Sciatic nerve (tissue), 2 donors: ENCODE measurements at regions of chr6 and their contacts with region 1.

Region 1: GRCh38 chr6:46720401-46720800 is 14.8 kb downstream of the PLA2G7 start:
- DNase-seq: no peak
- ATAC-seq: no peak

Region 2: GRCh38 chr6:48520951-48521350 is 1800.5 kb after region 1 on chr6:
- intact Hi-C with region 1: loop called (anchors 10 kb)
- DNase-seq: no peak
- ATAC-seq: no peak